Mammary epithelial cell (primary cell): ENCODE measurements at regions of chr16 and their contacts with region 1.

Region 1: DNA sequence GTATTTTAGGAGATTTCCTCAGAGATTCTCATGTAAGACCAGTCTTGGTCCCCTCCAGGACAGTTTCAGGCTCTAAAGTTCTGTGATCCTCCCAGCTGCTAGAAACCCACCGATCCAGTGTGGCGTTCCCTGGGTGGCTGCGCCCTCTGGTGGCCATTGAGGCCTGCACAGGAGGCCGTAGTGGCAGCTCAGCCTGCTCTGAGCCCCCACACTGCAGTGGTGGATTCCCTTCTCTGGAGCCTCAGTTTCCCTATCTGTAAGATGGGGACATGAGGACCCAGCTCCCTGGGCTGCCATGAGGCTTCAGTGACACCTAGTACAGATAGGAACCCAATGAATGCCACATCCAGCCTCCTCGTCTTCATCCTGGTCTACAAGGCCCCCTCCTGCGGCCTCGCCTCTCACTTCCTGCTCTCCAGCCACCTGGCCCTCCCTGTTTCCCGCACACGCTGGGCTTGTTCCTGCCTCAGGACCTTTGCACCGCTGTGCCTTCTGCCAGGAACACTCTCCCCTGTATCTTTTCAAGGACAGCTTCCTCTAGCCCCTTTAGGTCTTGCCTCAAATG is 16.5 kb downstream of the CCDC102A start:
- DNase-seq: peak; percentile 20
- H3K4me3 ChIP-seq: no peak overlapping the region
- H3K27ac ChIP-seq: no peak overlapping the region
- H3K4me1 ChIP-seq: no peaks in the 10 kb centered on the region
- H3K27me3 ChIP-seq: no peaks in the 10 kb centered on the region
- CTCF ChIP-seq: peak; percentile 93 to 98

Region 2: GRCh38 chr16:57416122-57416509 is 103.8 kb before region 1 on chr16:
- CTCF ChIA-PET with region 1: interaction called, 9 read pairs
- dilution Hi-C with region 1: no loop called
- in situ Hi-C with region 1: loop called (anchors 5 to 10 kb)
- intact Hi-C with region 1: loop called (anchors 1 kb)
- DNase-seq: no peak
- H3K4me3 ChIP-seq: no peak overlapping the region
- H3K27ac ChIP-seq: no peak overlapping the region
- H3K4me1 ChIP-seq: peaks cover 17% of the 10 kb centered on the region
- H3K27me3 ChIP-seq: no peaks in the 10 kb centered on the region
- CTCF ChIP-seq: no peak

Region 3: DNA sequence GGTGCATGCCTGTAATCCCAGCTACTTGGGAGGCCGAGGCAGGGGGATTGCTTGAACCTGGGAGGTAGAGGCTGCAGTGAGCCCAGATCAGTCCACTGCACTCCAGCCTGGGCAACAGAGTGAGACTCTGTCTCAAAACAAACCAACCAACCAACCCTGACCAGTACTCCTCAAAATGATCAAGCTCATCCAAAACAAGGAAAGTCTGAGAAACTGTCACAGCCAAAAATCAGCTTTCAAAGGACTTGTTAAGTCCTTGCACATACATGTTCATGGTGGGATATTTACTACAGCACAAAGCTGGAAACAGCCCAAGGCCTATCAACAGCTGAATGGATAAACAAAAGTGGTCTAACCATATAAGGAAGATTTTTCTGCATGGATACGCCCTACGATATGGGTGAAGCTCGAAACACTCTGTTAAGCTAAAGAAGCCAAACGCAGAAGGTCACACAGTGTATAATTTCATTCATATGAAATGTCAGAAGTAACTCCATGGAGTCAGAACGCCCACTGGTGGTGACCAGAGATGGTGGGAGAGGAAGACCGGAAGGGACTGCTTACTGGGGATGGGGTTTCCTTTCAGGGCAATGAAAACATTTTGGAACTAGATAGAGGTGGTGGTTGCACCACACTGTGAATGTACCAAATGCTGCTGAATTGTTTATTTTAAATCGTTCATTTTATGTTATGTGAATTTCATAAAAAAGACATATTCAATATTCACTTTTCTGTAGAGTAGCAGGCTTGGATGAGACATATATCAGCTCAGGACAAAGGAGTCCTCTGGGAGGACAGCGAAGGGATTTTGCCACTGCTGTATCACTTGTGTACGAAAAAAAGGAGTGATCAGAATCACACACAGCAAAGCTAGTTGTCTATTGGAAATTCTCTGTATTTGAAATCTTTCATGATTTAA is 97.6 kb before region 1 on chr16:
- CTCF ChIA-PET with region 1: interaction called, 9 read pairs
- dilution Hi-C with region 1: no loop called
- in situ Hi-C with region 1: loop called (anchors 5 to 10 kb)
- intact Hi-C with region 1: loop called (anchors 1 kb)
- DNase-seq: peak; percentile 33
- H3K4me3 ChIP-seq: no peak overlapping the region
- H3K27ac ChIP-seq: no peak overlapping the region
- H3K4me1 ChIP-seq: peaks cover 12% of the 10 kb centered on the region
- H3K27me3 ChIP-seq: no peaks in the 10 kb centered on the region
- CTCF ChIP-seq: peak; percentile 69

Region 4: DNA sequence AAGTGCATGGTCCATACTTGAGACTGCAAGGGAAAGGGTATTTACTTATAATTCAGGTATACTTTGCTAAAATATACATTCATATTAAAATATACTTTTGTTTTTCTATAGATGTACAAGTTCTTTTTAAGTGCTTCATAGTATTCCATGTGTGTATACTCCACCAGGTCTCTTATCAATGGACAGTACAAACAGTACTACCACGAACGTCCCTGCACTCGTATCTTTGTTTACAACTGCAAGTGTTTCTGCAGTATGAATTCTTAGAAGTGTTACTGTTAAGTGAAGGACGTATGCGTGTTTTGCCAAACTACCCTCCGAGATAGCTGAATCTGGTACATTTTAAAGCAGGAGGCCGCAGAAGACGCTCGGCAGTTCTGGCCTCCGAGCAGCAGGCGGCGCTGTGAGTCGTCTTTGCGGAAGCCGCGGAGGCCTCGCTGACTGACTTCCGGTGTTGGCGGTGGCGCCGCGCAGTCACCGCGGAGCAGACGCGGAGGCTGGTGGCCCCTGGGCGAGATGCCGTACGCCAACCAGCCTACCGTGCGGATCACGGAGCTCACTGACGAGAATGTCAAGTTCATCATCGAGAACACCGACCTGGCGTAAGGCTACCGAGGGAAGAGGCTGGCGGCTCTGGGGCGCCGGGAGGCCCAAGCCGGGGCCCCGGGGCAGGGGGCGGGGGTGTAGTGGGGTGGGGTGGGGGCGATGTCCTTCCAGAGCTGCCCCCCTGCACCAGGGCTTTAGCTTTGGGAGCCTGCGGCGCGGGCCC is 57.5 kb before region 1 on chr16 and contains the start of gene POLR2C:
- CTCF ChIA-PET with region 1: no interaction called
- dilution Hi-C with region 1: no loop called
- in situ Hi-C with region 1: no loop called
- intact Hi-C with region 1: loop called (anchors 1 kb)
- DNase-seq: peak; percentile 75
- H3K4me3 ChIP-seq: peak within 1 kb of the TSS; percentile 55 to 94 (median 88)
- H3K27ac ChIP-seq: peak within 1 kb of the TSS; percentile 35
- H3K4me1 ChIP-seq: peaks cover 5% of the 10 kb centered on the region
- H3K27me3 ChIP-seq: no peaks in the 10 kb centered on the region
- CTCF ChIP-seq: peak; percentile 84 to 89
- total RNA-seq, gene POLR2C: 45.1 to 82.2 TPM